Activated naive CD4-positive, alpha-beta T cell treated with anti-CD3 and anti-CD28 coated beads for 36 hours (primary cell): ENCODE measurements at regions of chr22 and their contacts with region 1.

Region 1: GRCh38 chr22:31211862-31212730 is at the start of gene LIMK2:
- DNase-seq: peak; percentile 98
- H3K4me3 Mint-ChIP-seq: peak within 1 kb of the TSS; percentile 82
- H3K27ac Mint-ChIP-seq: peak within 1 kb of the TSS; percentile 79
- H3K4me1 Mint-ChIP-seq: peaks cover 41% of the 10 kb centered on the region
- H3K27me3 Mint-ChIP-seq: no peaks in the 10 kb centered on the region
- total RNA-seq, gene LIMK2: 50.8 to 50.9 TPM

Region 2: DNA sequence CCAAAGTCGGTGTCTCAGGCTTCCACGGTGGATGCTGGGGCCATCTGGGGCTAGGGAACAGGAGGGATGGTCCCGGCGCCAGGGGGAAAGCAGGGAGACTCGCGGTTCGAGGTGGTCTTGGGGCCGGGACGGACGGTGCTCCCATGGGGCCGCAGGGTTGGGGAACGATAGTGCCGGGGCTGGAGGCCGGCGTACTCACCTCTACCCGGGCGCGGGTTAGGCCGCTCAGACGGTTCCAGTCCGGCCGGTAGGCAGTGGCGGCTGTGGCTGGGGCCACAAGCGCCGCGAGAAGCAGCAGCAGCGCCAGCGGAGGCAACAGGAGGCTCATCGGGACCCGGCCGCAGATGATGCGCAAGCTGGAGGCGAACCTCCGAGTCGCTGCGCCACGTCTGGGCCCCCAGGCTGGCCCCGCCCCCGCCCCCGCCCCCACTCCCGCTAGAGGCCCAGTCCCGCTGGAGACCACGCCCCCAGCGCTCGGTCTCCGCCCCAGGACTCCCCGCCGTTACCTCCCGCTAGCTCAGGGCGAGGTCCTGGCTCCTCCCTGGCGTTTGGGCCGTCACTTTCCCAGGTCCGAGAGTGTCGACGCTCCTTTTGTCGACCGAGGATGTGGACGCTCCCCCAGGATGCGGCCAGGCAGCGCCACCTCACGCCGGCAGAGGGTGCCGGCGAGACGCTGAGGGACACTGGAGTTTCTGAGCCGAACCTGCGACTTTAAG is 104.8 kb before region 1 on chr22 and contains the start of gene SELENOM:
- CTCF ChIA-PET with region 1: interaction called, 7 read pairs
- intact Hi-C with region 1: loop called (anchors 2 kb)
- DNase-seq: peak; percentile 92
- H3K4me3 Mint-ChIP-seq: peak within 1 kb of the TSS; percentile 89
- H3K27ac Mint-ChIP-seq: peak within 1 kb of the TSS; percentile 76
- H3K4me1 Mint-ChIP-seq: peaks cover 19% of the 10 kb centered on the region
- H3K27me3 Mint-ChIP-seq: no peaks in the 10 kb centered on the region
- total RNA-seq, gene SELENOM: 9.3 to 11.0 TPM

Region 3: GRCh38 chr22:31199183-31199582 is 12.9 kb before region 1 on chr22:
- CTCF ChIA-PET with region 1: interaction called, 21 read pairs
- intact Hi-C with region 1: no loop called
- DNase-seq: no peak
- H3K4me3 Mint-ChIP-seq: no peak overlapping the region
- H3K27ac Mint-ChIP-seq: no peak overlapping the region
- H3K4me1 Mint-ChIP-seq: no peaks in the 10 kb centered on the region
- H3K27me3 Mint-ChIP-seq: no peaks in the 10 kb centered on the region

Region 4: GRCh38 chr22:31272522-31273446 is 60.7 kb after region 1 on chr22:
- CTCF ChIA-PET with region 1: interaction called, 59 read pairs
- intact Hi-C with region 1: no loop called
- DNase-seq: peak; percentile 76
- H3K4me3 Mint-ChIP-seq: no peak overlapping the region
- H3K27ac Mint-ChIP-seq: no peak overlapping the region
- H3K4me1 Mint-ChIP-seq: peaks cover 58% of the 10 kb centered on the region
- H3K27me3 Mint-ChIP-seq: no peaks in the 10 kb centered on the region

Region 5: GRCh38 chr22:31313366-31314147 is 101.5 kb after region 1 on chr22:
- CTCF ChIA-PET with region 1: interaction called, 42 read pairs
- intact Hi-C with region 1: loop called (anchors 1 kb)
- DNase-seq: peak; percentile 87
- H3K4me3 Mint-ChIP-seq: no peak overlapping the region
- H3K27ac Mint-ChIP-seq: peak overlapping the region; percentile 12
- H3K4me1 Mint-ChIP-seq: peaks cover 27% of the 10 kb centered on the region
- H3K27me3 Mint-ChIP-seq: no peaks in the 10 kb centered on the region

Region 6: GRCh38 chr22:31496007-31496734 is 284.1 kb after region 1 on chr22 and contains the start of gene SFI1:
- CTCF ChIA-PET with region 1: no interaction called
- intact Hi-C with region 1: loop called (anchors 10 kb)
- DNase-seq: peak; percentile 95
- H3K4me3 Mint-ChIP-seq: peak within 1 kb of the TSS; percentile 94
- H3K27ac Mint-ChIP-seq: peak within 1 kb of the TSS; percentile 94
- H3K4me1 Mint-ChIP-seq: peaks cover 55% of the 10 kb centered on the region
- H3K27me3 Mint-ChIP-seq: no peaks in the 10 kb centered on the region
- total RNA-seq, gene SFI1: 147 to 155 TPM

Region 7: DNA sequence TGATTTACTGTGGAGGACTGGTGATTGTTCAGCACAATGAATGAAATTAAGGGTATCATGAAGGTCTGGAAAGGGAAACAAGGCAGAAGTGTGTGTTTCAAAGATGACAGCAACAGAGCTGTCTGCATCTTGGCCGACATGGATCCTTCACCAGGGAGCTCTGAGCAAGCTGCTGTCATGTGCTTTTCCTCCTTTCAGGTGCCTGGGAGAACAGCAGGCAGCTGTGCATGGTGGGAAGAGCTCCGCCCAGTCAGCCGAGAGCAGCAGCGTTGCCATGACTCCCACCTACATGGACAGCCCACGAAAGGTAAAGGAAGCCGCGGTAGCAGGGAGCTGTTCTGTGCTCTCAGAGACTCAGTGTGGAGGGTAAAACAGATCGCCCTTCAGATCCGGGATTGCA is 645.2 kb after region 1 on chr22:
- CTCF ChIA-PET with region 1: no interaction called
- intact Hi-C with region 1: no loop called
- DNase-seq: no peak
- H3K4me3 Mint-ChIP-seq: no peak overlapping the region
- H3K27ac Mint-ChIP-seq: no peak overlapping the region
- H3K4me1 Mint-ChIP-seq: peaks cover 7% of the 10 kb centered on the region
- H3K27me3 Mint-ChIP-seq: no peaks in the 10 kb centered on the region